K562 (cell line): ENCODE measurements at regions of chr13 and their contacts with region 1.

Region 1: DNA sequence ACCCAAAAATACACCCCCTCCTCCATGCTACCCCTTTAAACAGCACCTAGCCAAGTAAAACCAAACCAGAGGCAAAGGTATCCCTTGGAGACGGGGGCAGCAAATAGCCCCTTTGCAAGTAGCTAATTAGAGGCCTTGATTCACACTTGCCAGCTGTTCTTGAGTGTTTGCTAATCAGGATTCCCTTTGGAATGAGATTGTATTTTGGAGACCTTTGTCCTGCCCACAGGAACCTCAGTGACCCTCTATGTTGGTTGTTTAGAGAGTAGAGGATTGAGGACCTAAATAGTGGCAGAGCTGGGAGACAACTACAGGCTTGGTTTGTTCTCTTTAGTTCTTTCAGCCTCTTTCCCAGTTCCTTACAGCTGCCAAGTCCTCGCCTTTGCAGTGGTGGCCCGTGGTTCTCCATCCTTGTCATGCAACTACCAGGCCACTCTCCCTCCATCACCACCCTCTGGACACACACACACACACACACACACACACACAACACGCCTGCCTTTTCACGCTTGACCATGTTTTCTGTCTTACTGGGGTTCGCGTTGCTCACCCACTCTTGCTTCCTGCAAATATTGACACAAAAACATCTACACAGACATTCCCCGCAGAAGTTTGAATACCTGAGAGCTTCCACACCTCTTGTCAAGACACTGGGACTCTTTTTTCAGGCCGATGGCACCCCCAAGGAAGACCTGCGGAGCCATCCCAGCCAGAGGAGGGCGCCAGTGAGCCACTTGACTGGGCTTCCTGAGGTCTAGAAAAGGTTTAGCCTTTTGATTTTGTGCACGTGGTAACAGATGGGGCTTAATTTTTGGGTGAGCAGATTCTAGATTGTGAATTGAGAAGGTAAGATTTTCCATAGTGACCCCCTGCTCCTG is 80.0 kb upstream of the GPR183 start:
- DNase-seq: peak; percentile 66 to 78 (median 74)
- ATAC-seq: peak; percentile 92
- H3K4me3 ChIP-seq: no peak overlapping the region
- H3K27ac ChIP-seq: no peak overlapping the region
- H3K4me1 ChIP-seq: no peaks in the 10 kb centered on the region; a peak in 1 of 5 replicates
- H3K27me3 ChIP-seq: no peaks in the 10 kb centered on the region
- CTCF ChIP-seq: peak; percentile 85 to 91 (median 88)
- EP300 ChIP-seq: no peak
- POLR2A ChIP-seq: no peak
- RAD21 ChIP-seq: peak; percentile 54 to 77

Region 2: DNA sequence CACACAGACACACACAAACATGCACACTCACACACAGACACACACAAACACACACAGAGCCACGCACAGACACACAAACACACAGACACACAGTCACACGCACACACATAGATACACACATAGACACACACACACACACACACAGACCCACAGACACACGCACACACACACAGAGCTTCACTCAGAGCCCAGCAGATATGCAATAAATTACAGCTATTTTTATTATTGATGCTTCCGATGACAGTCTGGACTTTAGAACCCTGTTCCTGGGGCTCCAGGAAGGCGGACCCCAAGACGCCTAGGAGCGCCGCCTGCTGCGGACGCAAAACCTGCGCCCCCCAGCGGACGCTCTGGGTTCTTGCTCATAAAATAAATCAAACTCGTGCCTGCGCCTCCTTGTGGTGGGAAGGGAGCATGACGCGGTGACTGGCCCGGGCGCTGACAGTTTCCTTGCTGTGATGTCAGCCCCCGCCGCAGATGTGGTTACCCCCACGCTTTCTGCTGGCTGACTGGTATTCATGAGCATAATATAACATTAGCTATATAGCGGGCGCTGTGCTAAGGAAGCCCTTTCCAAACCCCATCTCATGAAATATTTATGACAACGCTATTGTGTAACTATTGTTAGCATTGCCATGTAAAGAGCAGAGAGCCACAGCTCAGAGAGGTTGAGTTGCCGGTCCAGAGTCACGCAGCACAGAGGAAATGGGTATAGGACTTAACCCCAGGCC is 49.7 kb after region 1 on chr13:
- CTCF ChIA-PET with region 1: interaction called, 5 read pairs
- POLR2A ChIA-PET with region 1: no interaction called
- in situ Hi-C with region 1: no loop called
- intact Hi-C with region 1: loop called (anchors 1 kb)
- DNase-seq: peak; percentile 75 to 89 (median 76)
- ATAC-seq: peak; percentile 76
- H3K4me3 ChIP-seq: no peak overlapping the region
- H3K27ac ChIP-seq: no peak overlapping the region; the same call in 2 of the 3 replicates
- H3K4me1 ChIP-seq: peaks cover 23 to 28% of the 10 kb centered on the region in 2 experiments; a peak in 4 of 5 replicates
- H3K27me3 ChIP-seq: peaks cover 0 to 13% of the 10 kb centered on the region in 2 experiments; a peak in 2 of 5 replicates
- CTCF ChIP-seq: peak; percentile 99 to 100 (median 100)
- EP300 ChIP-seq: 0 out of 2 replicates have a peak, but pooled peaks have one; percentile 6
- POLR2A ChIP-seq: no peak
- RAD21 ChIP-seq: peak; percentile 92 to 95